ENCODE measurements at regions of chr6 and their contacts with region 1.

Region 1: DNA sequence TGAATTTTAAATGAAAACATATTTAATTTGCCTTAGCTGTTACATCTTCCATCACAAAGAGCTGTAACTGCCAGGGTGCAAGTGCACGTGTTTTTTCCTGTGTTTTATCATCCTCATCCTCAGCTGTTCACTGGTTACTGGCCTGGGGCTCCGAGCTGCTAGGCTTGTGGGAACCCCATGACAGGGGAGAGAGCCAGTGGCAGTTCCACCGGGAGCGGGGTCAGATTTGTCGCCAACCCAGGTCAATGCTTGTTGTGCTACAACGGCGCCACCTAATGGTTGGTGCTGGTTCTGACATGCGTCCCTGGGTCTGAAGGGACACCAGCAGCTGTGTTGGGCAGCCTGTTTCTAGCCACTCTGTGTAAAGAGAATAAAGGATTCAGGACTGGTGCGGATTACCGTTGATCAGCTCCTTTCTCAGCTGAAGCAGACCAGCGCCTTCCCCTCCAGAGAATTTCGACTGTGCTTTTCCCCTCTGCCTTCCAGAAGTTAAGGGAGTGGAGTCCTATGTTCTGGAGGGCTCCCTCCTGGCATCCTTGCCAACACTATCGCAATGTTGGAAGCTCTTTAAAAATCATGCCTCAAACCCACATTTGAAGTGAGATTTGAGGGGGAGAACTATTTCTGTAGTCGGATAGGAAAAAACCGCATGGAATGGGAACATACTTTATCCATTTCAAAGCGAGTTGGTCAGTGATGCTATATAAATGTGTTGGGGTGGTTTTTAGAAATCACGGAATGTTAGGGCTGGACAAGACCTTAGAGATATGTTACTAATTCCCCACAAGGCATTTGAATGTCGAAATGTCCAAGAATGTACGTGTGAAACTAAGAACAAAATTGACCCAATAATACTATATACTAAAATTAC is 32.1 kb downstream of the SUMO4 start:
- DNase-seq: peak; percentile 97
- H3K4me3 Mint-ChIP-seq: peak overlapping the region; percentile 69
- H3K27ac Mint-ChIP-seq: peak overlapping the region; percentile 92
- H3K4me1 Mint-ChIP-seq: peaks cover 16% of the 10 kb centered on the region
- H3K27me3 Mint-ChIP-seq: no peaks in the 10 kb centered on the region

Region 2: GRCh38 chr6:148559848-148560433 is 872.2 kb before region 1 on chr6:
- intact Hi-C with region 1: loop called (anchors 10 kb)
- DNase-seq: peak; percentile 90
- H3K4me3 Mint-ChIP-seq: no peak overlapping the region
- H3K27ac Mint-ChIP-seq: no peak overlapping the region
- H3K4me1 Mint-ChIP-seq: peaks cover 7% of the 10 kb centered on the region
- H3K27me3 Mint-ChIP-seq: peaks cover 25% of the 10 kb centered on the region

Region 3: DNA sequence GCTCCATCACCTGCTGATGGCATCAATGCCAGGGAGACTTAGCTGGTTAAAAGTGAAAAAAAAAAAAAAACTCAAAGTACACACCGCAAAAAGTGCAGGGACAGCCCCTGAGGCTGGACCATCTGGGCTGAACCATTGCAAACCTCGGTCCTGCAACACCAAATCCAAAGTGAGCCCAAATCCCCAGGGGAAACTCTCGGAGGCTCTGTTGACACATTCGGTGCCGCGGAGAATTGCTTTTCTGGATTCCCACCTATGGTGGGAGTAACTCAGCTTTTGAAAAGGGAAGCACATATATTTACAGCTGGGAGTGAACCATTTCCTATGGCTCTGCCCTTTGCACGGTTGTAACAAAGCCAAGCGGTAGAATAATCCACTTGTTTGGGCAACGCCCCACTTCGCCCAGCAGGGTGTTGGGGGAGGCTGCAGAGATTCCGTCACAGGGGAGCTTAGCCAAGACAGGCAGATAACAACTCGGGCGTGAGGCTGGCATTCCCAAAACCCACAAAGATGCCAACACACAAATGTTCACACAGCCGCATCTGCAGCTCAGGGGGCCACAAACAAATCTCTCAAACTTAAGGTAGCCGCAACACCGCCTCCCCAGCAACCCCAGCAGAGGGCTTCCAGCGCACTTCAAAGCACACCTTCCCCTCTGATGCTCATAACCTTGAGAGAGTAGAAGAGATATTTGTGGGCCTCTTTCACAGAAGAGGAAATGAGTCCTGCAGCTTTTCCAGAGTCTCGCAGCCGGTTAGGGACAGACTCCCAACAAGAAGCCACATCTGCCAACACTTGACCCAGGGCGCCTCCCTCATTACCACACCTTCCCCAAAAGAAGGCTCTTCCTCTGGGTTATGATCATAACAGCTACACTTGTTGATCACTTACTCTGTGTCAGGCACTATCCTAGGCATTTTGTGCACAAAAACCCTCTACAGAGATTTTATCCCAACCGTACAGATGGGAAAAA is 41.2 kb after region 1 on chr6:
- intact Hi-C with region 1: no loop called
- DNase-seq: no peak
- H3K4me3 Mint-ChIP-seq: no peak overlapping the region
- H3K27ac Mint-ChIP-seq: peak overlapping the region; percentile 29
- H3K4me1 Mint-ChIP-seq: peaks cover 39% of the 10 kb centered on the region
- H3K27me3 Mint-ChIP-seq: no peaks in the 10 kb centered on the region

Region 4: DNA sequence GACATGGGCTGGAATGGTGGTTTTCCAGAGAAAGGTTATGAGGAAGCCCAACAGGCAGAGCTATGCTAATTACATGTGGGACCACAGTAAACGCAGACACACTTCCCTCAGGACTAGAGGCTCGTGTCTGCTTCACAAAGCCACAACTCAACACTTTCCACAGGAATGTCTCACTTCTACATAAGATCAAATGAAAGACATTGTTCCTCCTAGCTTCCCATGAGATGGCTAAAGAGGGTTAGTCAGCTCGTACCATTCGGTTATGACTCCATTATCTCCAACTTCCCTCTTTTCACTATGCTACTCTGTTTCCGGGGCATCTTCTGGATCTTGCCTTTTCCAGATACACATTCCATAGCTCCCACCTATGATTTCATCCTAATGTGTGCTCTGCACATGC is 81.8 kb after region 1 on chr6:
- intact Hi-C with region 1: loop called (anchors 2 kb)
- DNase-seq: peak; percentile 49
- H3K4me3 Mint-ChIP-seq: no peak overlapping the region
- H3K27ac Mint-ChIP-seq: peak overlapping the region; percentile 67
- H3K4me1 Mint-ChIP-seq: peaks cover 44% of the 10 kb centered on the region
- H3K27me3 Mint-ChIP-seq: no peaks in the 10 kb centered on the region

Measured in activated CD4-positive, alpha-beta T cell treated with anti-CD3 and anti-CD28 coated beads, Interleukin-2, amount 10 ng/mL, durations not matched to agents 24 days and 14 days (primary cell).